ENCODE measurements at regions of chr19 and their contacts with region 1.

Region 1: DNA sequence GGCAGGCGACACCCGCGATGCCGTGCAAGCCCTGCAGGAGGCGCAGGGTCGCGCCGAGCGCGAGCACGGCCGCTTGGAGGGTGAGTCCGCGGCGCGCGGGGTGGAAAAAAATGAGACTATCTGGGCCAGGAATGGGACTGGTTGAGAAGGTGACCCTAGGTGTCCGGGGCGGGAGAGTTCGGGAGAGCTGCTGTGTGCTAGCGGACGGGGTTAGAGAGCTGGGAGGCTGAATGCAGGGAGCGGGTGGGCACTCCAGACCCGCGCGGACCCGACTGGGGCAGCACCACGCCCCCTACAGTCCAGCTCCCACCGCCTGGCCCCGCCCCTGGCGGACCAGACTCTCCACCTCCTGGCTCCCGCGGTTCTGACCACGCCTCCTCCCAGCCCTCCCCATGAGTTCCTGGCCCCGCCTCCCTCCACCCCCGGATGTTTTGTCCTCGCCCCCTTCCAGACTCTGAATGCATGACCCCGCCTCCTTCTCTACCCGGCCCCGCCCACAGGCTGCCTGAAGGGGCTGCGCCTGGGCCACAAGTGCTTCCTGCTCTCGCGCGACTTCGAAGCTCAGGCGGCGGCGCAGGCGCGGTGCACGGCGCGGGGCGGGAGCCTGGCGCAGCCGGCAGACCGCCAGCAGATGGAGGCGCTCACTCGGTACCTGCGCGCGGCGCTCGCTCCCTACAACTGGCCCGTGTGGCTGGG is 1.5 kb downstream of the CLEC11A start:
- DNase-seq: peak; percentile 99 to 100 (median 99)

Region 2: DNA sequence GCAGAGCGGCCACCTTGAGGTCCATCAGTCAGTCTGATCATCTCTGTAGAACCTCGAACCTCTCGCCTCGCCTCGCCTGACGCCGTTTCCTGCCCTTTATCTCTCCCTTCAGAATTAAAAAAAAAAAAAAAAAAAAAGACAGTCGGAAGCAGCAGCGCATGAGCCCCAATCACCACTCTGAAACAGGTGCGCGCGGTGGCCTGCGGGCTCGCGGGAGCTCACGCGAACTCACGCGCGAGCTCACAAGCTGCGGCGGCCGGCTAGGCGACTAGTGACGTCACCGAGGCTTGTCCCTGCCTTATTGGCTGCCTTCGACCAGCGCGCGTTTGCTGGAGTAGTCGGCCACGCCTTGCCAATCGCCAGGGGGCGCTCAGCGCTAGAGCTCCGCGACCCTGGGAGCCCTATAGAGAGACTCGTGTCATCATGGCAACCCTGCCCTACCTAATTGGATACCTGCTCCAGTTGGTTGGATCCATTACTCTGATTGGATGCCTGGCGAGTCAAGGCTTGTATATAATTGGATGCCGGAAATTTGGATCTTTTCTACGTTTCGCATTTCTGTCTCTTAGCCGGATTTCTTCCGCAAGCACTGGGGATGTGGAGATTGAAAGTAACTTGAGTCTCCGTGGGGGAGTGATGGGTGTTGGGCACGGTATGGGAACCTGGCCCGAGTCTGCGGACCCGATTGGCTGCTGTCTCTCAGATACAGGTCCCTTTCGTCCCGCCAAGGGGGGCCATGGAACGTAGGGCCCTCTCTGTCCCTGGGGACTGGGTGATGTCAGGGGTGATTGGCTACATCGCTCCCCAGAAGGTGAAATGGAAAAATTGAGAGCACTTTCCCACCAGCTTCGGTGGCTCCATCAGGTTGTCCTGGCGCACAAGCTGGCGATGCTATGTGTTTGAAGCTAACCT is 116.5 kb before region 1 on chr19:
- intact Hi-C with region 1: loop called (anchors 5 kb)
- DNase-seq: peak; percentile 94 to 100 (median 99)

Region 3: GRCh38 chr19:50657712-50658440 is 66.8 kb before region 1 on chr19:
- intact Hi-C with region 1: loop called (anchors 5 kb)
- DNase-seq: peak; percentile 95 to 100 (median 98)